ENCODE measurements at regions of chr5 and their contacts with region 1.

Region 1: DNA sequence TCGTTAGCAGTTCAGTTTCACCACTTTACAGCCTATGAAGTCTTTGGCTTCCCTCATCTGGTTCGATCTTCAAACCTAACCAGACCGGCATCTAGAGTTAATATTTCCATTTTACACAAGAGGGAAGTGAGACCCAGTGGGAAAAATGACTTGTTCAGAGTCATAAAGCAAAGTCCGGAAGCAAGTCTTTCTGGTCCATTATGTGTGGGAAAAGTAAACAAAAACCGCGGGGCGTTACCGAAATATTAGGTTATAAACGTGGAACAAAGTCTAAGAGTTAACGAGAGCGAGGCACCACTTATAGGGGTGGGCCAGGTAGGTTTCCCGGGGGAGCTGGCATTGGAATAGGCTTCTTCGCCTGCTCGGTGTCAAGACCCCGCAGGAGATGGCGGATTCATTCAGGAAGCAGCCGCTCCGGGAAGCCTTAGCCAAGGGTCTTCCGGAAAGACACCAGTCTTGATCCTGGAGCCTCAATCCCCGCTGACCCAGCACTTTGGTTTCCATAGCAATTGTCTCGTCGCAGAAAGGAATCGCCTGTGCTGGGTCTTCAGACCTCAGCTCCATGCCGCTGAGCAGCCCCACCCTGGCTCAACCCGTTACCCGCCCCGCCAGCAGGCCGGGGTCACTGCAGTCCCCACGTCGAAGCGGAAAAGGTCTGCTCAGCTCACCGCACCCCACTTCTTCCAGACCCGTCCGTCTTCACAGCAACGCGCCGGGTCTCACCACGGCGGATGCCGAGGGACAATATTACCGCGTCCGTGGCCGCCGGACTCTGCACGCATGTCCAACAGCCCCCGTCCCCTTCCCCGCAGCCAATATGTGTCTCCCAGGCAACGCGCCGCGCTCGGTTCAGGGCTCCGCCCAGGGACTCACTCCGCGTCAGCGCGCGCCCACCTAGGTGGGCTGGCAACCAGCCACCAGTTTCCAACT is at the start of gene C5orf52:
- DNase-seq: no peak
- H3K4me3 Mint-ChIP-seq: peak within 1 kb of the TSS; percentile 93
- H3K27ac Mint-ChIP-seq: peak within 1 kb of the TSS; percentile 82
- H3K4me1 Mint-ChIP-seq: peaks cover 42% of the 10 kb centered on the region
- H3K27me3 Mint-ChIP-seq: peaks cover 2% of the 10 kb centered on the region
- total RNA-seq, gene C5orf52: 0.39 TPM in 1 of 2 replicates, not detected in the other

Region 2: GRCh38 chr5:157431544-157432200 is 239.3 kb before region 1 on chr5:
- intact Hi-C with region 1: loop called (anchors 5 kb)
- DNase-seq: peak; percentile 7
- H3K4me3 Mint-ChIP-seq: no peak overlapping the region
- H3K27ac Mint-ChIP-seq: no peak overlapping the region
- H3K4me1 Mint-ChIP-seq: peaks cover 8% of the 10 kb centered on the region
- H3K27me3 Mint-ChIP-seq: peaks cover 22% of the 10 kb centered on the region

Region 3: GRCh38 chr5:157575381-157576020 is 95.4 kb before region 1 on chr5 and contains the start of gene ADAM19:
- intact Hi-C with region 1: loop called (anchors 1 kb)
- DNase-seq: peak; percentile 58
- H3K4me3 Mint-ChIP-seq: peak within 1 kb of the TSS; percentile 96
- H3K27ac Mint-ChIP-seq: peak within 1 kb of the TSS; percentile 92
- H3K4me1 Mint-ChIP-seq: peaks cover 64% of the 10 kb centered on the region
- H3K27me3 Mint-ChIP-seq: no peaks in the 10 kb centered on the region
- total RNA-seq, gene ADAM19: 341 and 348 TPM in 2 replicates

Region 4: DNA sequence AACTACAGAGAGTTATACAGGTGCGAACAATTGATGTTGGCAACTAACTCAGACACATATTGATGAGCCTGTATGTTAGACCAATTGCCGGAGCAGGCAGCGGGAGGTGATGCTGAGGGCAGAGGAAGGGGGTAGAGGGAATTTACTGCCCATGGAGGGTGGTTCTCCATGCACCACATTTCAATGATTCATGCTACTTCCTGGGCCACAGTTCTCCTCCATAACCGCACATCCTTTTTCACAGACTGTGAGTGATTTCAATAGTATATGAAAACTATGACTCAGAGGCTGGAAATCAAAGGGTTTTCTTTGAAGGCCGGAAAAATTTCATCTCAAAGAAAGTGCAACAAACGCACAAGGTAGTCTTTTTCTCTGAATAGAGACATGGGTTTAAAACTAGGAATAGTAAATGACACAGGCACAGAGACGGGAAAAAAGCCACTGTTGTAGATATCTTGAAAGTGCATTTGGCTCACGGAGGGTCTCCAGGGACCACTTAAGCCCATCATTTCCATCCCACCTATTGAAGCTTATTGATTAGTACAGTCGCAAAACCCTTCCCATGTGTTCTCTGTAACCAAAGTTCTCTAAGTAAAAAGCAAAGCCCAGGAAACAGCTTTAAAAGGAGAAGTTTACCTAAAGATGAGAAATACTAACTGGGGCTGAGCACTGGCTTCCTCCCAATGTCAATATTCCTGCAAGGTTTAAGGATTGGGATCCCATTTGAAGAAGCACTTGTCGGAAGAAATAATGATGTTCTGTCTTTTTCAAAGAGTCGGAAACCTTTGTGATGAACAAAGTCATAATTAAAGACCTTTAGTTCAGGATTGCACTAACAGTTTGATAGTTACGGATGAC is 67.4 kb before region 1 on chr5:
- intact Hi-C with region 1: loop called (anchors 1 kb)
- DNase-seq: peak; percentile 74
- H3K4me3 Mint-ChIP-seq: peak overlapping the region; percentile 59
- H3K27ac Mint-ChIP-seq: peak overlapping the region; percentile 88
- H3K4me1 Mint-ChIP-seq: peaks cover 79% of the 10 kb centered on the region
- H3K27me3 Mint-ChIP-seq: no peaks in the 10 kb centered on the region

Region 5: GRCh38 chr5:157657516-157657915 is 13.4 kb before region 1 on chr5:
- intact Hi-C with region 1: loop called (anchors 2 kb)
- DNase-seq: no peak
- H3K4me3 Mint-ChIP-seq: no peak overlapping the region
- H3K27ac Mint-ChIP-seq: no peak overlapping the region
- H3K4me1 Mint-ChIP-seq: peaks cover 5% of the 10 kb centered on the region
- H3K27me3 Mint-ChIP-seq: peaks cover 3% of the 10 kb centered on the region